A673 (cell line): ENCODE measurements at regions of chr15 and their contacts with region 1.

Region 1: DNA sequence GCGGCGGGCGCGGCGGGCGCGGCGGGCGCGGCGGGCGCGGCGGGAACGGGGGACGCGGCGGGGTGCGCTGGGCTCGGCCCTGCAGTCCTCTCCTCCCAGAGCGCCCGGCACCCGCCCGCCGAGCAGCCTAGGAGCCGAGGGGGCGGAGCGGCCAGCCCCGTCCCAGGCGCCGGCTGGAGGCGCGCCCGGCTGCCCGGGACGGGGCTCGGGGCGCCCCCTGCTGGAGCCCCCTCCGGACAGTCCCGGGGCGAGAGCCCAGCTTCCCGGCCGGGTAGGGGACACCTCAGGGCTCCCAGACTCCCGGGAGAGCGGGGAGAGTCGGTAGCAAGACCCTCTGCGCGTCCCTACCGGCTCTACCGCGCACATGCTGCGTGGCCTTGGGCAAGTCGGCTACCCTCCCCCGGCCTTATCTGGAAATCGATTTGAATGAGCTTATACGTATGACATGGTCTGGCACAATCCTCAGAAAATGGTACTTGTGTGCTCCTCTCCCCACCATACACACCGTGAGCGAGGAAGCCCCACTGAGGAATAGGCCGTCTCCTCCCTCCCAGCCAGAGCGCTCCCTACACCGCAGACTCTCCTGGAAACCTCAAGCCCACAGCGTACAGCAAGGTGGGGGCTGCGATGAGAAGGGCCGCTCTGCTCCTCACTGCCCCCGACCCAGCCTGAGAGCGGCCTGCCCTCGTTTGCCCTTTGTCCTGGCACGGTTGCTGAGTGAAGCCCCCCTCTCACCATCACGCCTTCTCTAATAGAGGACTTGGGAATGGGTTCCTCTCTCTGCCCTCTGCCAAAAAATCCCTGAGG is at the start of gene DAPK2:
- DNase-seq: peak; percentile 83
- H3K4me3 ChIP-seq: peak within 1 kb of the TSS; percentile 63
- H3K27ac ChIP-seq: no peak within 1 kb of the TSS
- H3K4me1 ChIP-seq: peaks cover 6% of the 10 kb centered on the region
- H3K27me3 ChIP-seq: no peaks in the 10 kb centered on the region
- CTCF ChIP-seq: peak; percentile 70
- total RNA-seq, gene DAPK2: 15.7 and 19.2 TPM in 2 replicates

Region 2: DNA sequence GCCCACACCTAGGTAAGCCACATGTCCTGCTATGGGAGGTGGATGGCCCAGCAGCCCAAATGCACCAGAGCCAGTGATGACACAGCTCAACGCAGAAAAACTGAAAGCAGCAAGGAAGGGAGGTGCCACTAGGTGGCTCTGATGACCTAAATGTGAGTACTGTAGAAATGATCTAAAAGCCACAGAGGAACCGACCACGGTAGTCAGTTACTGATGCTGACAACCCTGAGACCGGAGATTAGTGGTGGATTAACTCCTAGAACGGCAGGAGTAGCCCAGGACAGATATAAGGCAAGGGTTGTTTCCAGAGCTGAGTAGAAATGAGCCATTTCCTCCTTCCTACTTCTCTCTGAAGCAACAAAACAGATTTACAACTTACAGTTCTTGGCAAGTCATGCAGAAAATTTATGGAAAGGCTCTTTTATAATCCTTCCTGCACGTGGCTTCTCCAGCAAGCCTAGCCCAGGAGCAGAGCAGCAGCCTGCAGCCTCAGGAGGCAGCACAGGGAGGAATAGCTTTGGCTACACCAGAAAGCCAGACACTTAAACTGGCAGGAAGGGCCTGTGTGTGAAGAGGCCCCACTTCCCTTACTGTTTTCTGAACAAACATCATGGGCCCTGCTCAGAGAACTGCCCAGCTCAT is 436.2 kb before region 1 on chr15:
- CTCF ChIA-PET with region 1: interaction called, 7 read pairs
- POLR2A ChIA-PET with region 1: no interaction called
- intact Hi-C with region 1: loop called (anchors 5 kb)
- DNase-seq: peak; percentile 98
- H3K4me3 ChIP-seq: no peak overlapping the region
- H3K27ac ChIP-seq: peak overlapping the region; percentile 91
- H3K4me1 ChIP-seq: peaks cover 26% of the 10 kb centered on the region
- H3K27me3 ChIP-seq: no peaks in the 10 kb centered on the region
- CTCF ChIP-seq: peak; percentile 90

Region 3: GRCh38 chr15:63945007-63945788 is 101.4 kb before region 1 on chr15:
- CTCF ChIA-PET with region 1: interaction called, 3 read pairs
- POLR2A ChIA-PET with region 1: no interaction called
- intact Hi-C with region 1: loop called (anchors 10 kb)
- DNase-seq: peak; percentile 73
- H3K4me3 ChIP-seq: no peak overlapping the region
- H3K27ac ChIP-seq: no peak overlapping the region
- H3K4me1 ChIP-seq: no peaks in the 10 kb centered on the region
- H3K27me3 ChIP-seq: no peaks in the 10 kb centered on the region
- CTCF ChIP-seq: peak; percentile 95

Region 4: GRCh38 chr15:64019764-64020163 is 26.8 kb before region 1 on chr15:
- CTCF ChIA-PET with region 1: no interaction called
- POLR2A ChIA-PET with region 1: no interaction called
- intact Hi-C with region 1: no loop called
- DNase-seq: no peak
- H3K4me3 ChIP-seq: no peak overlapping the region
- H3K27ac ChIP-seq: no peak overlapping the region
- H3K4me1 ChIP-seq: no peaks in the 10 kb centered on the region
- H3K27me3 ChIP-seq: no peaks in the 10 kb centered on the region
- CTCF ChIP-seq: no peak

Region 5: DNA sequence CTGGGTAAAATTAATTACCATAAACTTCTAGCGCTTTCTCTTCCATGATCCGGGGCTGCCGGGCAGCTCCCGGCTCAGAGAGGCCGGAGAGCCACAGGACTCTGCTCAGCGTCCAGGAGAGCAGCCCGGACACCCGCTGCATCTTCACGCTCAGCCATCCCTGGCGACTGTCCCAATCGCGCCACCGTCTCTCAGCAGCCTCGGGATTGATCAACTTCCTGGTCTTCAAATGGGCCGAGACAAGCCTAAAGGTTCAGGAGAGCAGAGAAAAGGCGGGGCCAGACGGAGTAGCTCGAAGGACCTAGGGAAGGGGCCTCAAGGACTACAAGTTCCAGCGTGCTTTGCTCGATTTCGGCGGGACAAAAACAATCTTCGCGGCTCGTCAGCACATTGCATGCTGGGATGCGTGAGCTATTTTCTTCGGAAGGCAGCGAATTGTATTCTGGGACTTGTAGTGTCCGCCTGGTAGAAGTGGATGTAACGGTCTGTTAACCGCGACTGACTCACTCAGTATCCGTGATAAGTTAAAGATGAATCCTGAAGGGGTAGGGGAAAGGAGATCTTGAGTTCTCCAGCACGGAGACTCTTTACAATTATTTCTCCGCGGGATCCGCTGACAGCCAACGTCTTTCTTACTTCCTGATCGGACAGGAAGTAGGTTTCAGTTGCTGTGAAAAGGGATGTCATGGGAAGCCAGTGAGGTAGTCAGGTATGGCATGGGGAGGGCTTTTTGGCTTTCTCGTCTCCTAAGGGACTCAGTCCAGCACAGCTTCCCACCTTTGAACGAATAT is 47.3 kb after region 1 on chr15 and contains the start of gene CIAO2A:
- CTCF ChIA-PET with region 1: interaction called, 3 read pairs
- POLR2A ChIA-PET with region 1: interaction called, 19 read pairs
- intact Hi-C with region 1: no loop called
- DNase-seq: peak; percentile 99
- H3K4me3 ChIP-seq: peak within 1 kb of the TSS; percentile 71
- H3K27ac ChIP-seq: peak within 1 kb of the TSS; percentile 82
- H3K4me1 ChIP-seq: peaks cover 43% of the 10 kb centered on the region
- H3K27me3 ChIP-seq: no peaks in the 10 kb centered on the region
- CTCF ChIP-seq: no peak
- total RNA-seq, gene CIAO2A: 75.3 and 75.6 TPM in 2 replicates